ENCODE measurements at regions of chr10 and their contacts with region 1.

Region 1: GRCh38 chr10:588241-589165 is 101.0 kb downstream of the DIP2C start:
- DNase-seq: peak; percentile 56 to 67
- ATAC-seq: peak; percentile 73 to 84 (median 78)
- H3K4me3 ChIP-seq: no peak overlapping the region
- H3K27ac ChIP-seq: no peak overlapping the region
- H3K4me1 ChIP-seq: peaks cover 0 to 38% (median 21%) of the 10 kb centered on the region in 9 donors
- H3K27me3 ChIP-seq: no peaks in the 10 kb centered on the region
- CTCF ChIP-seq: peak in 5 of 9 donors; percentile 27 to 45 (median 40)

Region 2: GRCh38 chr10:624605-625332 is 36.3 kb after region 1 on chr10:
- intact Hi-C with region 1: no loop called
- DNase-seq: peak; percentile 72 to 79
- ATAC-seq: peak; percentile 81 to 92 (median 90)
- H3K4me3 ChIP-seq: peak overlapping the region in 8 of 10 donors; percentile 1 to 40 (median 24)
- H3K27ac ChIP-seq: peak overlapping the region; percentile 70 to 94 (median 82)
- H3K4me1 ChIP-seq: peaks cover 10 to 58% (median 32%) of the 10 kb centered on the region in 9 donors
- H3K27me3 ChIP-seq: peaks cover 0 to 3% (median 0%) of the 10 kb centered on the region in 7 donors
- CTCF ChIP-seq: peak in 1 of 9 donors; percentile 10

Region 3: DNA sequence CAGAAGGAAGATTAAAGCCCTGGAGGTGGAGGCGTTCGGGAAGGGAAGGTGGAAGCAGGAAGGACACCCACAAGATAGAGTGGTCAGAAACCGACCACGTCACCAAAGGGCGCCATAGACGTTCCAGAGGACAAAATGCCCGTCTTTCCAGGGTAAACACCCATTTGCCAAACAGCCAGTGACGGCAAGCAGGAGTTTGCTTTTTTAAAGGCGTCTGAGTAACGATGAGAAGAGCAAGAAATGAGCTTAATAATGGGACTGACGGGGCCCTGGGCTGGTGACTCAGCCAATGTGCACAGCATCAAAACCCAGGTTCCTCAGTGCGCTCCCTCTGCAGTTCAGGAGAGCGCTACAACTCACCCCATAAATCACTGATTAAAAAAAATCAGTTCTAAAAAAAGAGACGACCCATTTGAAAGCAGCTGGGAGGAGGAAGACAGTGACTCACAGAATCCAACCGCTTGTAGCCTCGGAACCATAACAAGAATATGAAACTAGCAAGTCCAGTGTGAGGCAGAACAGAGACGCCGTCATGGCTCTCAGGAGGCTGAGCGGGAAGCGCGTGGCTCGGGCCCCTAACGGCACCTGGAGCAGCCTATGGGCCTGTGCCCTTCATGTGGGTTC is 95.1 kb after region 1 on chr10:
- intact Hi-C with region 1: loop called in 1 of 10 experiments (anchors 5 kb)
- DNase-seq: no peak
- ATAC-seq: peak in 1 of 8 donors; percentile 23
- H3K4me3 ChIP-seq: no peak overlapping the region
- H3K27ac ChIP-seq: peak overlapping the region in 3 of 10 donors; percentile 12 to 44 (median 17)
- H3K4me1 ChIP-seq: peaks cover 5 to 65% (median 40%) of the 10 kb centered on the region in 9 donors
- H3K27me3 ChIP-seq: peaks cover 0 to under 1% (median 0%) of the 10 kb centered on the region in 7 donors
- CTCF ChIP-seq: no peak

Region 4: DNA sequence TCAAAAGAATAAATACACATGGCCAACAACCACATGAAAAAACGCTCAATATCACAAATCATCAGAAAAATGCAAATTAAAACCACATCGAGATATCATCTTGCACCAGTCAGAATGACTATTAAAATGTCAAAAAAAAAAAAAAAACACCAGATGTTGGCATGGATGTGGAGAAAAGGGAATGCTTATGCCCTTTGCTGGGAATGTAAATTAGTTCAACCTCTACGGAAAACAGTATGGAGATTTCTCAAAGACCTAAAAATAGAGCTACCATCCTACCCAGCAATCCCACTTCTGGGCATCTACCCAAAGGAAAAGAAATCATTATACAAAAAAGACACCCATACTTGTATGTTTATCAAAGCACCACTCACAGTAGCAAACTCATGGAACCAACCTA is 146.0 kb after region 1 on chr10:
- intact Hi-C with region 1: no loop called
- DNase-seq: no peak
- ATAC-seq: no peak
- H3K4me3 ChIP-seq: no peak overlapping the region
- H3K27ac ChIP-seq: no peak overlapping the region
- H3K4me1 ChIP-seq: no peaks in the 10 kb centered on the region
- H3K27me3 ChIP-seq: peaks cover 0 to 32% (median 5%) of the 10 kb centered on the region in 7 donors
- CTCF ChIP-seq: no peak

Region 5: DNA sequence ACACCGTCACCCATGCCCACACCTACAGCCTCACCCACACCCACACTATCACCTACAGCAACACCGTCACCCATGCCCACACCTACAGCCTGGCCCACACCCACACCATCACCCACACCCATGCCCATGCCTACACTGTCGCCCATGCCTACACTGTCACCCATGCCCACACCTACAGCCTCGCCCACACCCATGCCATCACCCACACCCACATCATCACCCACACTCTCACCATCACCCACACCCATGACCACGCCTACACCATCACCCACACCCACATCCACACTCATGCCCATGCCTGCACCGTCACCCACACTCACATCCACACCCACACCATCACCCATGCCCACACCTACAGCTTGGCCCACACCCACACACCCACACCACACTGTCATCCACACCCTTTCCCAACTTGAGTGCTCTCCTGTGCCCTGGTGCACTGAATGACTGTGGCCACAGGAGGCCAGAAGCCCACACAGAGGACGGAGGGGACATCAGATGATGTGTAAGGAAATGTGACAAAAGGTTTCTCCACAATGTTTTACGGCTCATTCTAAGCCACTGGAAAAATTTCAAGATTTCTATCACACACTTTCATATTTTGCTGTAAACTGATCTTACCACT is 621.0 kb after region 1 on chr10:
- intact Hi-C with region 1: no loop called
- DNase-seq: no peak
- ATAC-seq: peak in 1 of 8 donors; percentile 17
- H3K4me3 ChIP-seq: no peak overlapping the region
- H3K27ac ChIP-seq: no peak overlapping the region
- H3K4me1 ChIP-seq: no peaks in the 10 kb centered on the region
- H3K27me3 ChIP-seq: peaks cover 0 to 13% (median 3%) of the 10 kb centered on the region in 7 donors
- CTCF ChIP-seq: no peak